Heart left ventricle (tissue), 16 donors: ENCODE measurements at regions of chr10 and their contacts with region 1.

Region 1: DNA sequence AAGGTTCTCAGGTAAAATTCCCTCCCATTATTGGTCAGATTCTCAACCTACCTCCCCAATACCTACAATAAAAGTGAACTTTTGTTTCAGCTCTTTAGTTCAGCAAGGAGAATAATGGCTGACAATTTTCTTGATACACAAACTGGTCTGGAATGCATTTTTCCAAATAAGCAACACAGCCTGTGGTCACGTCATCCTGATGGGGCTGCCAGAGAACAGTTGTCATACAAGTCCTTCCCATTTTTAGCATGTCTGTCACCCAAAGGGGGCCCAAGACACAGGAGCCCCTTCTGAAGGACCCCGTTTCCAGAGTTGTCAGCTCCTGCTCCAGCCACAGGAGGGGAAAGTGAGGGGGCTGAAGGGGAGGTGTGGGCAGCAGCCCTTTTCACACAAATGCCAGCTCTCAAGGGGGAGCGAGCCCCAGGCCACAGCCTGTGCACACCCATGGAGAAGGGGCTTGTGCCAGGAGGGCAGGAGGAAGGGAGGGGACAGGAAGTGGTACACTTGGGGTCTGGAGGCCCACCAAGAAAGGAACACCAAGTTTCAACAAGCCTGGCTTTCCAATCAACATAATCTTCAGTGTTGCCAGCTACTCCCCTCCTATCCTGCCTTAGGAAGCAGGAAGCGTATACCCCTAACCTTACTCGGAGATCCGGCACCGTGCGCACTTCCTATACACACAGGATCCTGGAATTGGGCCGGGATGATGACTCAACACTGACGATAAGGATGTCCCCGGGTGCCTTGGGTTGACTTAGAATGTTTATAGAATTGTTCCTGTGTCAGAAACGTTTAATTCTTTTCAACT is 43.4 kb upstream of the PDLIM1 start:
- DNase-seq: peak; percentile 80 to 91 (median 89)
- ATAC-seq: peak; percentile 81 to 94 (median 87)
- H3K4me3 ChIP-seq: peak overlapping the region in 1 of 12 donors; percentile 3
- H3K27ac ChIP-seq: peak overlapping the region; percentile 80 to 96 (median 92)
- H3K4me1 ChIP-seq: peaks cover 8 to 85% (median 38%) of the 10 kb centered on the region in 12 donors
- H3K27me3 ChIP-seq: no peaks in the 10 kb centered on the region
- CTCF ChIP-seq: no peak
- POLR2A ChIP-seq: peak in 1 of 2 donors; percentile 26

Region 2: DNA sequence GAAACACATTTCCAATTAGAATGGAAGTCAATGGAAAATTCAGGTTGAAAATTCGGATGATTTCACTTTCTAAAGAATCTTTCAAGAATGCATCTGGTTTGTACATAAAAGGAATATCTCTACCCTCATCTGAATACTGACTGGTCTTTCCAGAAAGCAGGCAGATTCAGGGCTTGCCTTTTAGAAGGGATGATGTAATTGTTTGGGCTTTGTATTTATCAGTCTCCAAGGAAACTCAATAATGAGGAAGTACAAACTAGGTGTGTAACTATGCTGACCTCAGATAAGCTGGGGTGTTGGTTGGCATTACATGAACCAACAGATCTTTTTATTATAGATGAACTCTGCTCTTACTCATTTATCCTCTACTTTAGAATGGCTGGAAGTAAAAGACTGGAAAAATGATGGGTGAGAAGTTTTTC is 67.5 kb before region 1 on chr10:
- intact Hi-C with region 1: loop called in 2 of 10 experiments (anchors 5 to 10 kb)
- DNase-seq: no peak
- ATAC-seq: peak; percentile 68 to 80 (median 74)
- H3K4me3 ChIP-seq: no peak overlapping the region
- H3K27ac ChIP-seq: peak overlapping the region; percentile 47 to 88 (median 80)
- H3K4me1 ChIP-seq: peaks cover 12 to 76% (median 51%) of the 10 kb centered on the region in 12 donors
- H3K27me3 ChIP-seq: no peaks in the 10 kb centered on the region
- CTCF ChIP-seq: no peak
- POLR2A ChIP-seq: no peak

Region 3: GRCh38 chr10:95290461-95291364 is 43.5 kb before region 1 on chr10 and contains the start of gene PDLIM1:
- intact Hi-C with region 1: loop called in 6 of 10 experiments (anchors 5 kb)
- DNase-seq: peak; percentile 82 to 88 (median 85)
- ATAC-seq: peak; percentile 23 to 92 (median 80)
- H3K4me3 ChIP-seq: peak within 1 kb of the TSS; percentile 77 to 100 (median 90)
- H3K27ac ChIP-seq: peak within 1 kb of the TSS; percentile 83 to 99 (median 94)
- H3K4me1 ChIP-seq: peaks cover 6 to 55% (median 46%) of the 10 kb centered on the region in 12 donors
- H3K27me3 ChIP-seq: no peaks in the 10 kb centered on the region
- CTCF ChIP-seq: peak in 8 of 12 donors; percentile 15 to 51 (median 43)
- POLR2A ChIP-seq: peak; percentile 8 to 92
- total RNA-seq, gene PDLIM1: 225 to 434 (median 349) TPM

Region 4: DNA sequence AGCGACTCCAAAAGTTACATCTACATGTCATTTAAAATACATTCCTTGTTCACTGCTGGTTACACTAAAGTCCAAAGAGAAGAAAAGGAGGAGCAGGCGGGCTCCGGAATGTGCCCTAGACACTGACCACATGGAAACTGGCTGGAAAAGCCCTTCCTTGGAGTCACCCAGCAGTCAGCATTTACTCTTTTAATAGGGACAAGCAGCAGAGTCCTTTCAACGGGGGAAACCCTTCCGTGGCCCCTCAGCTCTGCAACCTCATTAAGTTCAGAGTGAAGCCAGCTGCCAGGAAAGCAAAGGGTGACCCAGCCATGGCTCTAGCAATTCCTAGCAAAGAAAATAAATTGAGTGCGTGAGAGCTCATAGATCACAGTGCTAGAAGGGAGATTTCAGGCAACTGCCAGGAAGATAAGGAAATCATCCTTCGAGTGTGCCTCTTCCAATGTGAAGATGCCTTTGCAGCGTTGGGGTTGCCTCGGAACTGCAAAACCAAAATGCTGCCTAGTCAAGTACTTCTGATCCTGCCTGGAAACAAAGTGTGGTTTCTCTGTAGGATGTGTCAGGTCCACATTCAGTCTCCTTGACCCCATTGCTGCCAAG is 125.3 kb after region 1 on chr10:
- intact Hi-C with region 1: no loop called
- DNase-seq: no peak
- ATAC-seq: peak in 1 of 4 donors; percentile 31
- H3K4me3 ChIP-seq: no peak overlapping the region
- H3K27ac ChIP-seq: peak overlapping the region; percentile 11 to 94 (median 54)
- H3K4me1 ChIP-seq: peaks cover 3 to 87% (median 47%) of the 10 kb centered on the region in 12 donors
- H3K27me3 ChIP-seq: no peaks in the 10 kb centered on the region
- CTCF ChIP-seq: no peak
- POLR2A ChIP-seq: no peak

Region 5: DNA sequence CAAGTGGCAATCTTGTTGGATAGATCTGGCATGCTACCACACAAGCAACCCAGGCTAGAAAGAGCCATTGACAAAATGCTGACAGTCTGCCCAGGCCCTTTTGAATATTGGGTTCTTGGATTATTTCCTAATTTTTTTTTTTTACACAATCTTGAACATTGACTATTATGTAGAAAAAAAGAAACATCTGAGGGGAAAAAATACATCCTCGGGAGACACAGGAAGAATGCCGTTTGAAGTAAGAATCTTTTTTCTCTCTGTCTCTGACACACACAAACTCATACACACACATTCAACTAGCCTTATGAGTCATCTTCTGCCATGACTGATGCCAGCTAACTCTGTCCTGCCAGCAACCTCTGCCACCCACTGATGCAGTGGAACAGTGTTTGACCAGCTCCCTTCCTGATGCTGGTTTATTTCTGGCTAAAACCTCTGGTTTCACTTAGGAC is 179.8 kb after region 1 on chr10:
- intact Hi-C with region 1: no loop called
- DNase-seq: peak in 4 of 5 donors; percentile 44 to 72 (median 53)
- ATAC-seq: peak; percentile 42 to 77 (median 70)
- H3K4me3 ChIP-seq: no peak overlapping the region
- H3K27ac ChIP-seq: peak overlapping the region; percentile 53 to 91 (median 75)
- H3K4me1 ChIP-seq: peaks cover 16 to 99% (median 74%) of the 10 kb centered on the region in 12 donors
- H3K27me3 ChIP-seq: no peaks in the 10 kb centered on the region
- CTCF ChIP-seq: no peak
- POLR2A ChIP-seq: no peak

Region 6: GRCh38 chr10:95693668-95694534 is 359.7 kb after region 1 on chr10 and contains the start of gene TCTN3:
- intact Hi-C with region 1: no loop called
- DNase-seq: peak; percentile 97 to 98 (median 98)
- ATAC-seq: peak; percentile 100
- H3K4me3 ChIP-seq: peak within 1 kb of the TSS; percentile 64 to 95 (median 81)
- H3K27ac ChIP-seq: peak within 1 kb of the TSS in 11 of 12 donors; percentile 58 to 92 (median 80)
- H3K4me1 ChIP-seq: peaks cover 0 to 36% (median 16%) of the 10 kb centered on the region in 12 donors
- H3K27me3 ChIP-seq: no peaks in the 10 kb centered on the region
- CTCF ChIP-seq: peak; percentile 98 to 100 (median 99)
- POLR2A ChIP-seq: peak in 1 of 2 donors; percentile 80
- total RNA-seq, gene TCTN3: 9.0 to 20.6 (median 12.3) TPM